Cardiac septum (tissue), 1 donor: ENCODE measurements at regions of chr11 and their contacts with region 1.

Region 1: DNA sequence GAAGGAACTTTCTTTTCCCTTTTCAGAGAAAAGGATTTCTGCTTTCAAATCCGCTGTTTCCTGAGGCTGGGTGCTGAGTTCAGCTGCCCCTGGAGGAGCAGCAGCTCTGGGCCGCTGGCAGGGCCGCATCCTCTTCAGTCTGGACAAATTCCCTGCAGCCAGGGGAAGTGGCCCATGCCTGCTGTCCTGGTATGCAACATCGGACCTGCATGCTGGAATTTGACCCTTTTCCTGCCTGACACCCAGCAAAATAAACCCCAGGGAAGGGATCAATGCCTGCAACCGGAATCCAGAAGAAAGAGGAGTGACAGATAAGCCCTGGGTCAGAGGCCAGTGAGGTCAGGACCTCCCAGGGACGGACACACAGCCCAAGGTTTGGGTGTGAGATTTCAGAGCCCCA is 54.1 kb upstream of the LINC01488 start:
- DNase-seq: peak; percentile 67

Region 2: GRCh38 chr11:69131644-69132300 is 295.6 kb before region 1 on chr11:
- intact Hi-C with region 1: loop called (anchors 10 kb)
- DNase-seq: no peak